ENCODE measurements at regions of chr15 and their contacts with region 1.

Region 1: DNA sequence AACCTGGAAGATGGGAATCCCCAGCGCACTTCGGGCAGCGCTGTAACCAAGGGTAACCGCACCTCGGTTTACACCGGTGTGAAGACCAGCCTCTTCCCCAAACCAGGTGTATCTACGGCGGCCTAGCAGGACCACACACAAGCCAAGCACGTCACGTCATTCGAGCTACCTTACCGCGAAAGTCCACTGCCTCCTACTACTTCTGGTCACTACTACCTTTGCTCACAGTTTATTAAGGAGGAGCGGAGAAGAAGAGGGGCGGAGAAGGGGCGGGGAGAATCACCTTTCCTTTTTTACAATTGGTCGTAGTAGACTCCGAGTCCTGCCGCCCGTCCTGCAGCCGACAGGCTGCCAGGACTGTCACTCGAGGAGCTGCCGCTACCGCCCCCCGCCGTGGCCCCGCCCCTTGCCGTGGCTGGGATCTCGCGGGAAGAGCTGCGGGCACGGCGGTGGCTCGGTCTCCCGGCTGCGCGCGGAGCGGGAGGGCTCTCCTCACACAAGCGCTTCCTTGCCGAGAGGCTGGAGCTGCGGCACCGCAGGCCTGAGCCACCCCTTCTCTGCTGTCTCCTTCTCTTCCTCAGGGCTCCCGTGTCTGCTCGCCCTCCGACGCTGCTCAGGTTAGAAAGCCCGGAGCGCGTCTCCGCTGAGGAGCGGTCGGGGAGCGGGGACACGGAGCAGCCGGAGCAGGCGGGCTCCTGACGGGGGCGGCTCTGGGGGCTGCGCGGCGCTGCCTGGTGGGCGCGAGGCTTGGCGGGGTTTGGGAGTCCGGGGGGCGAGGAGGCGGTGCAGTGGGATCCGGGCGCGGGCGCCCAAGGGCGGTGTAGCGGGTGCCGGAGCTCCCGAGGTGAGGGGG is at the start of gene GLCE:
- DNase-seq: peak; percentile 96
- H3K4me3 ChIP-seq: peak within 1 kb of the TSS; percentile 75 to 97 (median 92)
- H3K27ac ChIP-seq: peak within 1 kb of the TSS; percentile 80 to 86 (median 84)
- H3K4me1 ChIP-seq: peaks cover 0 to 15% (median 12%) of the 10 kb centered on the region in 4 donors
- H3K27me3 ChIP-seq: no peaks in the 10 kb centered on the region
- CTCF ChIP-seq: peak in 1 of 3 experiments; percentile 8
- EP300 ChIP-seq: no peak
- POLR2A ChIP-seq: peak; percentile 36
- total RNA-seq, gene GLCE: 9.6 to 13.2 (median 9.8) TPM

Region 2: DNA sequence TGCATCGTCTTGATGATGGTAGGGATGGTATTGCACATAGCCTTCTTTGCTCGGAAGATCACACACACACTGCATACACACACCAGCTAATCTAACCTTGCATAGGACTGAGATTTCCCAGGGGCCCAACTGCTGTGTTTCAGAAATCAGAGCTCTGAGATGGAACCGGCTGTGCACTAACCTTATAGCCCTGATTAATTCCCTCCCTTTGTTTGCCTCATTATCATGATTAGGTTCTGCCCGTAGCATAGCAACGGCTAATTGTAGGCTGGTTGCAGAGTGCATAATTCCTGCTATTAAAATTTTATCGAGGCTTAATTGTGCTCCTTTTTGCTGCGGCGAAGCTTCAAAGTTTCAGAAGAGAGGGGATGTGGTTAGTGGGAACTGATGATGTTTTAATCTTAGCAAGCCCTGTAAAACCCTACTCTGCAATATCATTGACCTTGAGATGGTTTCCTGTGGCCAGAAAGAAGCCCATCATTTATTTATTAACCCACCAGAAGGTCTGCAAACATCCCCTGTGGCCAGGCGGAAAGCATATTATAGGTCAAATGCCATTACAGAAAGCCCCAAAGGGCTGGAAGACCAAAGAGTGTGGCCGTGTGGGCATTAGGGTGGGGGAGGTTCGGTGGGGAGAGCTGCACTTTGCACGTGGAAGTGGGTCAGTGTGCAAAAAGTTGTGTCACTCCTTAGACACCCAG is 56.2 kb before region 1 on chr15:
- intact Hi-C with region 1: no loop called
- DNase-seq: no peak
- H3K4me3 ChIP-seq: no peak overlapping the region
- H3K27ac ChIP-seq: no peak overlapping the region
- H3K4me1 ChIP-seq: no peaks in the 10 kb centered on the region
- H3K27me3 ChIP-seq: no peaks in the 10 kb centered on the region
- CTCF ChIP-seq: no peak
- EP300 ChIP-seq: no peak
- POLR2A ChIP-seq: no peak

Region 3: GRCh38 chr15:69394556-69395282 is 234.4 kb after region 1 on chr15:
- intact Hi-C with region 1: loop called (anchors 2 kb)
- DNase-seq: peak; percentile 94
- H3K4me3 ChIP-seq: peak overlapping the region in 3 of 4 donors; percentile 7 to 38 (median 19)
- H3K27ac ChIP-seq: no peak overlapping the region
- H3K4me1 ChIP-seq: peaks cover 7 to 10% (median 10%) of the 10 kb centered on the region in 4 donors
- H3K27me3 ChIP-seq: peaks cover 0 to 10% (median 0%) of the 10 kb centered on the region in 4 donors
- CTCF ChIP-seq: peak; percentile 90 to 98 (median 97)
- EP300 ChIP-seq: no peak
- POLR2A ChIP-seq: no peak